ENCODE measurements at regions of chr19 and their contacts with region 1.

Region 1: GRCh38 chr19:3075895-3076431 is 13.7 kb upstream of the TLE5 start:
- DNase-seq: peak; percentile 79
- ATAC-seq: peak; percentile 97
- H3K4me3 Mint-ChIP-seq: no peak overlapping the region
- H3K27ac Mint-ChIP-seq: no peak overlapping the region
- H3K4me1 Mint-ChIP-seq: peaks cover 10% of the 10 kb centered on the region
- H3K27me3 Mint-ChIP-seq: no peaks in the 10 kb centered on the region
- CTCF ChIP-seq: peak; percentile 63

Region 2: GRCh38 chr19:3062168-3063102 is 13.5 kb before region 1 on chr19 and contains the start of gene TLE5:
- CTCF ChIA-PET with region 1: interaction called, 7 read pairs
- POLR2A ChIA-PET with region 1: interaction called, 6 read pairs
- intact Hi-C with region 1: loop called (anchors 2 kb)
- DNase-seq: peak; percentile 76
- ATAC-seq: peak; percentile 43
- H3K4me3 Mint-ChIP-seq: peak within 1 kb of the TSS; percentile 84
- H3K27ac Mint-ChIP-seq: peak within 1 kb of the TSS; percentile 89
- H3K4me1 Mint-ChIP-seq: peaks cover 65% of the 10 kb centered on the region
- H3K27me3 Mint-ChIP-seq: no peaks in the 10 kb centered on the region
- CTCF ChIP-seq: no peak
- total RNA-seq, gene TLE5: 323 TPM in 2 replicates

Region 3: DNA sequence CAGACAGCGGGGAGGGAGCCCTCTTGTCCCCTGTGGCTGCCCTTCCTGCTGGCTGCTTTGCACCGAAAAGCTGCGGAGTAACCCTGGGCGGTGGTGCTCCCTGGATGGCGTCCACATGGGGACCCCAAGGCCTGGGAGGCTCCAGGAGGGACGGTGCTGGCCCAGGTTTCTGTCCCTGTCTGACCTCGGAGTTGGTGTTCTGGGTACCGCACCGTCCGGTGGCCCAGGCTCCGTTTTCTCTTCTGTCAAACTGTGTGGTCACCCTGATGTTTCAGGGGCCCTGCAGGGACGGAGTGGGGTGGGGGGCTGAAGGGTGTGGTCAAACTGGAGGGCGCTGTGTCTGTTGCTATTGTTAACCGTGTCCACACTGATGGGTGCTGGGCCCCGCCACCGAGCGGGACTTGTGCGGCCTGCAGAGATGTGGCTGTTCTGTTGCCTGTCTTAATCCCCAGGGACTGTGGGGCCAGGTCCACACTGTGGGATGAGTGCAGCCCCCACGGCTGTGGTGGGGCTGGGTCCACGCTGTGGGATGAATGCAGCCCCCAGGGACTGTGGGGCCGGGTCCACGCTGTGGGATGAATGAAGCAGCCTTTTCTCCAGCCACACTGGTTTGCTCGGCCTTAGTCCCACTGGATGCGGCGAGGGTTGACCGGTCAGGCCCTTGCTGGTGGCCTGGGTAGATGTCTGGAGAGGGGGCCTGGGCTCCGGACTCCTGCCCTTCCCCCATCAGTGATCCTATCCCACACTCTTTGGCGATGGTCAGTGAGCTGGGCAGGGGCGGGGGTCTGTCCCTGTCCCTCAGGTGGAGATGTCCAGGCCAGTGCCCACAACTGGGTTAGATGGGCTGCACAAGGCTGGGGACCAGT is 25.1 kb after region 1 on chr19:
- CTCF ChIA-PET with region 1: interaction called, 32 read pairs
- POLR2A ChIA-PET with region 1: no interaction called
- intact Hi-C with region 1: loop called (anchors 1 kb)
- DNase-seq: no peak
- ATAC-seq: no peak
- H3K4me3 Mint-ChIP-seq: no peak overlapping the region
- H3K27ac Mint-ChIP-seq: no peak overlapping the region
- H3K4me1 Mint-ChIP-seq: peaks cover 29% of the 10 kb centered on the region
- H3K27me3 Mint-ChIP-seq: no peaks in the 10 kb centered on the region
- CTCF ChIP-seq: no peak

Region 4: GRCh38 chr19:3108775-3109174 is 32.8 kb after region 1 on chr19:
- CTCF ChIA-PET with region 1: interaction called, 32 read pairs
- POLR2A ChIA-PET with region 1: no interaction called
- intact Hi-C with region 1: loop called (anchors 1 kb)
- DNase-seq: peak; percentile 61
- ATAC-seq: peak; percentile 76
- H3K4me3 Mint-ChIP-seq: no peak overlapping the region
- H3K27ac Mint-ChIP-seq: no peak overlapping the region
- H3K4me1 Mint-ChIP-seq: peaks cover 11% of the 10 kb centered on the region
- H3K27me3 Mint-ChIP-seq: no peaks in the 10 kb centered on the region
- CTCF ChIP-seq: no peak

Region 5: DNA sequence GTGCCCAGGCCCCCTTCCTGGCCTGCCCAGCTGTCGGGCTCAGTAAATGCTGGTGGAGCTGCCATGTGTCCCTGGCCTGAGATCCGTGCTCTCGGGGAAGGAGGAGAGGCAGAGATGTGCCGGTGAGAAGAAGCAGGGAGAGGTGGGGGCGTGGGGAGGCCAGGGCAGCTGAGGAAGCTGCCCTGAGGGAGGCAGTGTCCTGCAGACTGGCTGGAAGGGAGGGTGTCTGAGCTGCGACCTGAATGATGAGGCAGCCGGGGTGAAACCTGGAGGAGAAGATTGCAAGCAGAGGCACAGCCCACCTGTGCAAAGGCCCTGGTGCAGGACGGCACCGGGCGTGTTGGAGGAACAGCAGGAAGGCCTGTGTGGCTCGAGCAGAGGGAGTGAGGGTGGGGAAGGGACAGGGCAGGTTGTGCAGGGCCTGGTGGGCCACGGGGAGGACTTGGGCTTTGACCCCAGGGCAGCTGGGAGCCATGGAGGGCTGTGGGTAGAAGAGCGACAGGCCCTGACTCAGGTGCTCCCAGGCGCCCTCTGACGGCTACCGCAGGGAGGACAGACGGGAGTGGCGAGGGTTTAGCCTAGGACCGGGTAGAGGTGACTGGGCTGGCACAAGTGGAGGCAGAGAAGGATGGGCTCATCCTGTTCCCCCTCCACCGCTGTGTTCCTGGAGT is 134.5 kb after region 1 on chr19:
- CTCF ChIA-PET with region 1: no interaction called
- POLR2A ChIA-PET with region 1: no interaction called
- intact Hi-C with region 1: loop called (anchors 1 kb)
- DNase-seq: peak; percentile 62
- ATAC-seq: peak; percentile 94
- H3K4me3 Mint-ChIP-seq: no peak overlapping the region
- H3K27ac Mint-ChIP-seq: no peak overlapping the region
- H3K4me1 Mint-ChIP-seq: peaks cover 14% of the 10 kb centered on the region
- H3K27me3 Mint-ChIP-seq: no peaks in the 10 kb centered on the region
- CTCF ChIP-seq: no peak